ENCODE measurements at regions of chr1 and their contacts with region 1.

Region 1: GRCh38 chr1:235093696-235094592 is 34.7 kb downstream of the TOMM20 start:
- ATAC-seq: peak; percentile 48 to 81 (median 66)
- H3K4me3 ChIP-seq: peak overlapping the region in 3 of 5 donors; percentile 1 to 15 (median 4)
- H3K27ac ChIP-seq: peak overlapping the region; percentile 4 to 35
- H3K4me1 ChIP-seq: peaks cover 25 to 30% of the 10 kb centered on the region in 2 donors

Region 2: DNA sequence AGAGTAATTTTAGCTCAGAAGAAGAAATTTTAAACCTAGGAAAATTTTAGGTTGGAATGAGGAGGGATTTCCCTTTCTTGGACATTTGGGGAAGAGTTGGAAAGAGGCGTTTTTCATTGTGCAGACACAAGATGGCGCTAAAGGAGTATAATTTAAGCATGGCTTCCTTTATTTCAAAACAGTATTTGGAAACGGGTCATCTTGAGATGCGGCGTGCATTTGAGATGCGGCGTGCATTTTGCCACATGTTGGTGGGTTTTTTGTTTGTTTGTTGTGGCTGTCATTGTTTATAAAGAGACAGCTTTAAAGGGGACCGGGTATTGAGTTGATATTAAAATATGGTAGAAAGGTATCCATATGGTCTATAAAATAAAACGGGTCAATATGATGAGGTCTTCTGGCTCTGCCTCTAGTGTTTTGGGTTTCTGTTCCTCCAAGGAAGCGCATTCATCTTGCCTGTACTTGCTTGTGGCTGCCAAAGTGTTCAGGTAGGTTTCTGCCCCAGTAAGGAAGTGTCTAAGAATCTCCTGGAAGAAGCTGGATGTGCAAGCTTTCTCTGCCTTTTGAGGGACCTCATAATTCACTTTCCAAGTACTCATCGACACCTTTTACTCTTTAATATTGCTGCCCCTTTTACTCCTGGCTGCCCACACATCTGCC is 979.2 kb before region 1 on chr1:
- in situ Hi-C with region 1: loop called in 2 of 9 experiments (anchors 25 kb)
- ATAC-seq: peak; percentile 38 to 76 (median 54)
- H3K4me3 ChIP-seq: no peak overlapping the region
- H3K27ac ChIP-seq: no peak overlapping the region
- H3K4me1 ChIP-seq: peaks cover 5 to 7% of the 10 kb centered on the region in 2 donors

Region 3: DNA sequence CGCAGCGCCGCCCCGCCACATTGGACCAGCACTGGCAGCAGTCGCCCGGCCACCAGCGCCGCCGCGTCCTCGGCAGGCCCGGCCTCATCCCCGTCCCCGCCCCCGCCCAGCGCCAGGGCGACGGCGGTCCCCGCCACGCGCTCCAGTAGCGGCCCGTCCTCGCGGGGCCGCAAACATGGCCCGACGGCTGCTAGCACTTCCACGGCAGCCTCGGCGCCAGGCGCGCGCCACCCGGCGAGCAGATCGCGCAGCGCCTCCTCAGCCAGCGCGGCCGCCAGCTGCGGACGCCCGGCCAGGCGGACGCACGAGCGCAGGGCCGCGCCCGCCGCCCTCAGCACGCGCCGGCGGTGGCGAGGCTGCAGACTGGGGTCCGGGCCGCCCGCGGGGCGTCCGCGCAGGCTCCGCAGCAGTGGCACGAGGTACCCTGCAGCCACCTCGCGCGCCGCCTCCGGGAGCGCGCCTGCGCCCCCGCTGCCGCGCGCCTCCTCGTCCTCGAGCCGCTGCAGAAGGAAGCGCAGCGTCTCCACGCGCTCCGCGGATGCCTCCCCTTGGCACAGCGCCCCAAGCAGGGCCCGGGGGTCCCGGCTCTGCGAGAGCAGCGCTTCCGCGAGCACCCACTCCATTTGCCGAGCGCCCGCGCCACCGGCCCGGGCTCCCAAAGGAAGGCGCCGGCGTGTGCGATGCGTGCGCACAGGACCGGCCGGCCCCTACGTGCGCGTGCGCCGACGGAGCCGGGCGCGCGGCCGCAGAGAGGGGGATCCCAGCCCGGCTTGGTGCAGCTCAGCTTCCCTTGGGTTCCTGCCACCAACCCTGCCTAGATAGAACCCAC is 615.2 kb before region 1 on chr1 and contains the start of gene TARBP1:
- in situ Hi-C with region 1: loop called in 2 of 9 experiments (anchors 25 kb)
- ATAC-seq: peak; percentile 81 to 90 (median 88)
- H3K4me3 ChIP-seq: peak within 1 kb of the TSS; percentile 57 to 77 (median 65)
- H3K27ac ChIP-seq: peak within 1 kb of the TSS; percentile 90 to 95
- H3K4me1 ChIP-seq: peaks cover 10 to 17% of the 10 kb centered on the region in 2 donors
- total RNA-seq, gene TARBP1: 23.4 to 71.7 (median 42.6) TPM

Region 4: DNA sequence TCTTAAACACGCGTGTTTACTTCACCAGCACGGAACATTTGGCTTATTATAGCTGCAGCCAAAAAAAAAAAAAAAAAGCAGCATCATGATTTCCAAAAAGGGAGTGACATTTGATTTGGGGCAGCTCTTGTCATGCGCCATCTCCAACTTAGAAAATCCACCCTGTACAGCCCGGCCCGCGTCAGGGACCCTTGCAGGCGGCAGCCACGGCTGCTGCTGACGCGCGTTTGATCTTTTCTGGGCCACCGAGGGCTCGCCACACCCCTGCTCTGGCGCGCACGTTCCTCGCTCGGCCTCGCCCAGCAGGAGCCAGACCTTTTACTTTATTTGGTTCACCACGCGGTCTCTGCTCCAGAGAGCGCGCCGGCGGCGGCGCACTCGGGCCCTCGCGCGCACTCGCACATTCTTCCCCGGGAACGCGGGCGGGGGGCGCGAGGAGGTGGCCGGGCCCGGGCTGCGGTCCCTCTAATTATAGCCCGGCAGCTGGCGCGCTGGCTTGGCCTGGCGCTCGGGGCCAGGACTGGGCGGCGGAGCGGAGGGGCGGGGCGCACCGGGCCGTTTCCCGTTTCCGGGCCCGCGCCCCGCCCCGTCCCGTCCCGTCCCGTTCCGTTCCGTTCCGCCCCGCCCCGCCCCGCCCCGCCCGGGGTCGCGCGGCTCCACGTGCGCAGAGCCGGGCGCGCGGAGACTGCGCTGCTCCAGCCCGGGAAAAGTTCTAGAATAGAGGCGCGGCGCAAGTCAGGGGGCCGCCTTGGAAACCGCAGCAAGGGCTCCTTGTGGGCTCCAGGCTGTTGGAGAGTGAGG is 494.1 kb before region 1 on chr1:
- in situ Hi-C with region 1: loop called in 7 of 9 experiments (anchors 5 to 25 kb)
- ATAC-seq: peak; percentile 67 to 88 (median 84)
- H3K4me3 ChIP-seq: peak overlapping the region; percentile 31 to 40 (median 38)
- H3K27ac ChIP-seq: peak overlapping the region; percentile 47 to 72
- H3K4me1 ChIP-seq: peaks cover 31 to 43% of the 10 kb centered on the region in 2 donors

Region 5: DNA sequence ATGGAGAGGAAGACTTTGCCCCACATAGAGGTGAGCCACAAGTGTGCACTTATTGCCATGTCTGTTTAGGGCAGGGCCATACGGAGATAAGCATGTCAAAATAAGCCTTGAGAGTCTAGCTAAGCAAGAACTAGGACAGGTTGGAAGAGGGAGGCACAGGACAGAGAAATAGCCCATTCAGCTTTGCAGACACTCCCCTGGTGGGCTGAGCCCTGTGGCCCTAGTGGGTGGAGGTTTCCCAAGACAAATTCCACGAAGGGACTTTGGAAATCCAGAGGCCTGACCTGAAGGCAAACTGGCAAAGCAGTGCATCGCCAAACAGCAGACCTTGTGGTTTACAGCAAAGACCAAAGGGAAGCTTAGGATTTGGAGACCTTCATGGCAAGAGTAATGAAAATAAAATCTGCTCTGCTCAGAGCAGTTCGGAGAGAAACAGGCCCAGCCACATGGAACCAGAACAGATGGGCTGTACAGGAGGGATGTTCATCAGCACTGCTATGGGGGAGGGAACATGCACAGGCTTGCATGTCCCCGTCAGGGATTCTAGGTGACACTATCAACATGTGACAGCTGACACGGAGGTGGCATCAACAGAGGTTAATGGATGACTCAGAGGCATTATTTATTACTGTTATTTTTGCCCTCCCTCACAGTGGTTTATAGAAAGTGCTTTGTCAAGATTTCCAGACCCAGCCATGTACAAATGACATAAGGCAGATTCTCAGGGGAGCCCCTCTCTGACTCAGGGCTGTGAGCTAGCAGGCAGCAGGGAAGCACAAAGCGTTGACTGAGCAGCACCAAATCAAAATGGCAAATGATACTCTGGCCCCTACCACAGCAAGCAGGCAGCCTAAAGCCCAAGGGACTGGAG is 393.9 kb before region 1 on chr1:
- in situ Hi-C with region 1: loop called in 1 of 9 experiments (anchors 25 kb)
- ATAC-seq: peak in 7 of 8 experiments; percentile 51 to 98 (median 97)
- H3K4me3 ChIP-seq: no peak overlapping the region
- H3K27ac ChIP-seq: peak overlapping the region; percentile 74 to 77
- H3K4me1 ChIP-seq: peaks cover 24 to 26% of the 10 kb centered on the region in 2 donors

Region 6: GRCh38 chr1:234851450-234852438 is 242.2 kb before region 1 on chr1:
- in situ Hi-C with region 1: no loop called
- ATAC-seq: peak; percentile 45 to 91 (median 75)
- H3K4me3 ChIP-seq: no peak overlapping the region
- H3K27ac ChIP-seq: no peak overlapping the region
- H3K4me1 ChIP-seq: peaks cover 23 to 25% of the 10 kb centered on the region in 2 donors